ENCODE measurements at regions of chr3 and their contacts with region 1.

Region 1: DNA sequence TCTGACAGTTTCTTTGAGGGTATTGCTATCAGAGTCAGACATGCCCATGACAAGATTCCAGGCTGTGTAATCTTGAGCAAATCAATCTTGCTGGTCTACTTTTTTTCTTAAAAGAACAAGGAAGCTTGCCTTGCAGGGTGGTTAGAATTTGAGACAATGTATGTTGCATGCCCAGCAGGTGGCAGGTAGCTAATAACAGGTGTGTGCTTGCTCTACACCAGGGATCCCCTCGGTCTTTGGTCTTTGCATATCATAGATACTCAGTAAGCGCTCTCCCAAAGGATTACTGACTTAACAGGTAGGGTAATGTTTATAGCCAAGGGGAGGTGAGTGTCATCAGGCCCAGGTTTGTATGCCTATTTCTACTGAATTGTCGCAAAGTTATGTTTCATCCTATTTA is 37.3 kb downstream of the CACNA1D start:
- DNase-seq: peak; percentile 57
- H3K4me3 Mint-ChIP-seq: no peak overlapping the region
- H3K27ac Mint-ChIP-seq: no peak overlapping the region
- H3K4me1 Mint-ChIP-seq: peaks cover 17% of the 10 kb centered on the region
- H3K27me3 Mint-ChIP-seq: no peaks in the 10 kb centered on the region
- CTCF ChIP-seq: peak; percentile 35

Region 2: DNA sequence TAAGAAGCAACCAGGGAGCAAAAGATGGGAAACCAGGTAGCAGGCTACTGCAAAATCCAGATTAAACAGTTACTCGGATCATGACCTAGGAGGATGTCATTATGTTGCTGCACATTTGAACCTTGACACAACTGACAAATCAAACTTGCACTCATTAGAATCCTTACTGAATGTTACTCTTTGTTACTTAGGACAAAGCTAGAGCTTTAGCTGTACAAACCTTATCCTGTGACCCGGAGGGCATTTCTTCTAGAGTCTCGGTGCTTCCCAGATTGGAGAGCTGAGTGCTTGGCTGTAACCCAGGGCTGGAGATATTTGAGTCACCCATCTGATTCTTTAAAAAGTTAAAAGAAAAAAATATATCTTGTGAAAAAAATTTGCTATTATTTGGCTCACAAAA is 227.8 kb before region 1 on chr3:
- CTCF ChIA-PET with region 1: no interaction called
- intact Hi-C with region 1: loop called (anchors 10 kb)
- DNase-seq: no peak
- H3K4me3 Mint-ChIP-seq: no peak overlapping the region
- H3K27ac Mint-ChIP-seq: no peak overlapping the region
- H3K4me1 Mint-ChIP-seq: no peaks in the 10 kb centered on the region
- H3K27me3 Mint-ChIP-seq: no peaks in the 10 kb centered on the region
- CTCF ChIP-seq: no peak

Region 3: DNA sequence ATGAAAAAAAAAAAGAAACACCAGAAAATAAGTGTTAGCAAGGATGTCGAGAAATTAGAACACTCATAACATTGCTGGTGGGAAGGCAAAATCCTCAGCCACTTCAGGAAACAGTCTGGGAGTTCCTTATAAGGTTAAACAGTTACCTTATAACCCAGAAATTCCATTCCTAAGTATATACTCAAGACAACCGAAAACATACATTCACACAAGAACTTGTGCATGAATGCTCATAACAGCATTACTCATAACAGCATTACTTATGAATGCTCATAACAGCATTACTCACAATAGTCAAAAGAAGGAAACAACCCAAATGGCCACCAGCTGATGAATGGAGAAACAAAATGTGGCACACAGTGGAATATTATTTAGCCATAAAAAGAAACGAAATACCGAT is 149.6 kb before region 1 on chr3:
- CTCF ChIA-PET with region 1: no interaction called
- intact Hi-C with region 1: no loop called
- DNase-seq: no peak
- H3K4me3 Mint-ChIP-seq: no peak overlapping the region
- H3K27ac Mint-ChIP-seq: no peak overlapping the region
- H3K4me1 Mint-ChIP-seq: no peaks in the 10 kb centered on the region
- H3K27me3 Mint-ChIP-seq: no peaks in the 10 kb centered on the region
- CTCF ChIP-seq: no peak

Region 4: GRCh38 chr3:53630547-53630946 is 98.8 kb after region 1 on chr3:
- CTCF ChIA-PET with region 1: no interaction called
- intact Hi-C with region 1: loop called (anchors 10 kb)
- DNase-seq: peak; percentile 50
- H3K4me3 Mint-ChIP-seq: peak overlapping the region; percentile 31
- H3K27ac Mint-ChIP-seq: peak overlapping the region; percentile 89
- H3K4me1 Mint-ChIP-seq: peaks cover 54% of the 10 kb centered on the region
- H3K27me3 Mint-ChIP-seq: no peaks in the 10 kb centered on the region
- CTCF ChIP-seq: no peak

Measured in Calu3 (cell line).